ENCODE measurements at regions of chr15 and their contacts with region 1.

Region 1: DNA sequence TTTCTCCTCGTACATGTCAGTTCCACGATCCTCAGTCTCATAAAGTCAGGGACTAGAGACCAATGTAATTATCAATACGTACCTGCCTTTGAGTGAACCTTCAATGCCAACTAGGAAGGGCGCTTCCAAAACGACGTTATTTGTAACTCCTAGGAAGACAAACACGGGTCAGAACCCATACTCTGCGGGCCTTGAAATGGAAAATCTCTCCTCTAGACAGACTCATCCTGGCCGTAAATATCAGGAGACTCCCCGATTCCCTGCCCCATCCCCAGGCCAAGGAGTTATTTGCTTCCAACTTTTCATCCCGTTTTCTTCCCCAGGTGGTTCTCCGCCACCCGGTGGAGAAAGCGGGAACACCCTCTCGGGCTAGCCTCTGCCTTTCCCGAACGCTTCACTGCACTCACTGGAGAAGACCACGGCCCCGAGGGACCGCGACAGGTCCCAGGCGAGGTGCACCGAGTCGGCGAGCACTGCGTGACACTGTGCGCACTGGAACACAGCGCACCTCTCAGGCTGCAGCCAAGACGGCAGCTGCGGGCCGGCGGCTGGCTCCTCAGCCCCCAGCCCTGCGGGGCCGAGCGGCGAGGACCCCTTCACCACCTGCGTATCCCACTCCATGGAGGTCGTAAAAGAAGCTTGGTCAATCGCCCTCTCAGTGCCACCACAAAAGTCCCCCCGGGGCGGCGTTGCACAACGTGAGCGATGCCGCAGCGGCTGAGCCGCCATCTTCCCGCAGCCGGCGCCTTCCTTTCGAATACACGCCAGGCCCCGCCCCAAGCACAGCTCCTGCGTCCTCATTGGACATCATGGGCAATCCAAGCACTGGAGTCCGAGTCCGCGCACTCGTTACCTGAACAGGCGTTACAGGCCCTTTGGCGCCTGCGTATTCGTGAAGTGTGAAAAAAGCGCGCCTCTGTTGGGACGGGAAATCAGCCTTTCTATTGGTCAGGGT is at the start of gene OIP5:
- DNase-seq: peak; percentile 100
- ATAC-seq: peak; percentile 94
- H3K4me3 ChIP-seq: peak within 1 kb of the TSS; percentile 87
- H3K27ac ChIP-seq: peak within 1 kb of the TSS; percentile 57
- H3K4me1 ChIP-seq: peaks cover 11% of the 10 kb centered on the region; the same call in 1 of the 2 replicates
- H3K27me3 ChIP-seq: no peaks in the 10 kb centered on the region
- CTCF ChIP-seq: peak; percentile 71
- total RNA-seq, gene OIP5: 26.6 and 40.3 TPM in 2 replicates

Region 2: DNA sequence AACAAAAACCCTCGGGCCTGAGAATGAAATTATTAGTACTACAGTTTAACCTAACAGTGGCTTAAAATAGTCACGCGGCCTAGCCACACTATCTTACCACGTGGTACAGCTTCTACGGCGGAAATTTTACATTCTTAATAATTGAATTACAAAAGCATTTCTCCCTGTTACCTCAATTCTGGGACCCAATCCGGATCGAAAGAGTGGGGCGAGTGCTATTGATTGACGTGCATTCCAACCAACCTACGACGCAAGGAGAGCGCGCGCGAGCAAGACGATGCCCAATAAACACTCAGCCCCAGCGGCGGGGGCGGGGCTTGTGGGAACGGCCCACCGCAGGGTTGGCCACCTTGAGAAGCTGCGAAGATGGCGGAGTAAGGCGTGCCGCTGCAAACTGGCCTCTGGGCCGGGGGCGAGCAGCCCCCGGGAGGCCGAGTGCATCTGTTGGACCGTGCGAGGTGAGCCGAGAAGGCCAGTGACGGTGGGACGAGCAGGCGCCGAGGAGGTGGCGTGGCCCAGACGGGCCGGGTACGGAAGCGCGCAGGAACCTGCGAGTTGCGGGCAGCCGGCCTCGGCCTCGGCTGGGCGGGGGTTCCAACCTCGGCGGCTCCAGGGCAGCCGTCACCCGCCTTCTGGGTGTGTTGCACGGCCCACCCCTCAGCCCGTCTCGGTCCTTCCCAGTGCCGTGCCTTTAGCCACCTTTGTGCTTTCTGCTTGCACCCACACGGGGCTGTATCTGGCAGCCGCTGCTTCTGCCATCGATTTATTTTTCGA is 48.3 kb before region 1 on chr15:
- CTCF ChIA-PET with region 1: interaction called, 8 read pairs
- POLR2A ChIA-PET with region 1: no interaction called
- intact Hi-C with region 1: loop called (anchors 2 kb)
- DNase-seq: peak; percentile 99
- ATAC-seq: peak; percentile 94
- H3K4me3 ChIP-seq: peak overlapping the region; percentile 91
- H3K27ac ChIP-seq: peak overlapping the region; percentile 47
- H3K4me1 ChIP-seq: peaks cover 37% of the 10 kb centered on the region
- H3K27me3 ChIP-seq: no peaks in the 10 kb centered on the region
- CTCF ChIP-seq: no peak

Region 3: GRCh38 chr15:41309226-41309905 is 22.7 kb before region 1 on chr15:
- CTCF ChIA-PET with region 1: no interaction called
- POLR2A ChIA-PET with region 1: interaction called, 13 read pairs
- intact Hi-C with region 1: no loop called
- DNase-seq: no peak
- ATAC-seq: no peak
- H3K4me3 ChIP-seq: no peak overlapping the region
- H3K27ac ChIP-seq: no peak overlapping the region
- H3K4me1 ChIP-seq: no peaks in the 10 kb centered on the region
- H3K27me3 ChIP-seq: no peaks in the 10 kb centered on the region
- CTCF ChIP-seq: no peak

Region 4: DNA sequence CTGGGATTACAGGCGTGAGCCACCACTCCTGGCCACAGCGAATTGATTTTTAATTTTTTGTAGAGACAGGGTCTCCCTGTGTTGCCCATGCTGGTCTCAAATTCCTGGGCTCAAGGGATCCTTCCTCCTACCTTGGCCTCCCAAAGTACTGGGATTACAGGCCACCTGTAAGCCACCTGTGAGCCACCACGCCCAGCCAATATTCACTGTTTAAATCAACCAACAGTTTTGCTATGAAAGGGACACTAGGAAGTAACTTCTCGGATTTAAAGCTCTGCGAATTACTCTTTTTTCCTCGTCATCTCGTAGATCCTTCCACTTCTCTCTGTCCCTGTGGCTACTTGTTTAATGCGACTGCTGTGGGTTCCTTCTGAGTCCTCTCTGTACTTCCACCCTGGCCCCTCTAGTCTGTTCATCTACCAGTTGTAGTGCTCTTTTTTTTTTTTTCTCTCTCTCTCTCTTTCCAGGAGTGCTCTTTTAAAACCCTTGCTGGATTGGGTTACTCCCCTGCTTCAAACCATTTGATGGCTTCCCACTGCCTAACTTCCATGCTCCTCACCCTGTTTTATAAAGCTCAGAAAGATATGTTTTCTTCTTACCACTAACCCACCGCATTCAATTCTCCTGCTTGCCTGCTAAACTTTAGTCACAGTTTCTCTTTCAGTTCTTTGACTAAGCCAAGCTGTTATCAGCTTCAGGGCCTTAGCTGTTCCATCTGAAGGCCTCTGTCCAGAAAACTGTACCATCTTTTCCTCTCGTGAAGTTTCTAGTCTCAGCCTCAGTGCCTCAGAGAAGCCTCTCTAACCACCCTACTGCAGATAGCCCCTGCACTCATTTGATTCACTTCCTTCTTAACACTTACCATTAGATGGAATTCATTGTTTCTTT is 97.1 kb after region 1 on chr15:
- CTCF ChIA-PET with region 1: no interaction called
- POLR2A ChIA-PET with region 1: no interaction called
- intact Hi-C with region 1: no loop called
- DNase-seq: no peak
- ATAC-seq: no peak
- H3K4me3 ChIP-seq: no peak overlapping the region
- H3K27ac ChIP-seq: no peak overlapping the region
- H3K4me1 ChIP-seq: no peaks in the 10 kb centered on the region
- H3K27me3 ChIP-seq: no peaks in the 10 kb centered on the region
- CTCF ChIP-seq: no peak

Region 5: GRCh38 chr15:41666353-41666920 is 334.3 kb after region 1 on chr15:
- CTCF ChIA-PET with region 1: no interaction called
- POLR2A ChIA-PET with region 1: no interaction called
- intact Hi-C with region 1: no loop called
- DNase-seq: peak; percentile 74
- ATAC-seq: peak; percentile 91
- H3K4me3 ChIP-seq: peak overlapping the region; percentile 7; the same call in 1 of the 2 replicates
- H3K27ac ChIP-seq: peak overlapping the region; percentile 9; the same call in 1 of the 2 replicates
- H3K4me1 ChIP-seq: peaks cover 27% of the 10 kb centered on the region
- H3K27me3 ChIP-seq: no peaks in the 10 kb centered on the region
- CTCF ChIP-seq: no peak

Measured in PC-3 (cell line).